Mammary epithelial cell (primary cell): ENCODE measurements at regions of chrX and their contacts with region 1.

Region 1: GRCh38 chrX:13487731-13488523 is 81.5 kb upstream of the EGFL6 start:
- DNase-seq: peak; percentile 93
- H3K4me3 ChIP-seq: no peak overlapping the region
- H3K27ac ChIP-seq: peak overlapping the region; percentile 84
- H3K4me1 ChIP-seq: peaks cover 35% of the 10 kb centered on the region
- H3K27me3 ChIP-seq: no peaks in the 10 kb centered on the region
- CTCF ChIP-seq: peak; percentile 52 to 70

Region 2: GRCh38 chrX:12701628-12702027 is 786.3 kb before region 1 on chrX:
- CTCF ChIA-PET with region 1: no interaction called
- dilution Hi-C with region 1: no loop called
- in situ Hi-C with region 1: no loop called
- intact Hi-C with region 1: loop called (anchors 10 kb)
- DNase-seq: peak; percentile 69
- H3K4me3 ChIP-seq: no peak overlapping the region
- H3K27ac ChIP-seq: no peak overlapping the region
- H3K4me1 ChIP-seq: peaks cover 6% of the 10 kb centered on the region
- H3K27me3 ChIP-seq: no peaks in the 10 kb centered on the region
- CTCF ChIP-seq: peak; percentile 53 to 77

Region 3: GRCh38 chrX:12751887-12752286 is 736.0 kb before region 1 on chrX:
- CTCF ChIA-PET with region 1: no interaction called
- dilution Hi-C with region 1: no loop called
- in situ Hi-C with region 1: no loop called
- intact Hi-C with region 1: no loop called
- DNase-seq: no peak
- H3K4me3 ChIP-seq: no peak overlapping the region
- H3K27ac ChIP-seq: no peak overlapping the region
- H3K4me1 ChIP-seq: no peaks in the 10 kb centered on the region
- H3K27me3 ChIP-seq: no peaks in the 10 kb centered on the region
- CTCF ChIP-seq: no peak

Region 4: DNA sequence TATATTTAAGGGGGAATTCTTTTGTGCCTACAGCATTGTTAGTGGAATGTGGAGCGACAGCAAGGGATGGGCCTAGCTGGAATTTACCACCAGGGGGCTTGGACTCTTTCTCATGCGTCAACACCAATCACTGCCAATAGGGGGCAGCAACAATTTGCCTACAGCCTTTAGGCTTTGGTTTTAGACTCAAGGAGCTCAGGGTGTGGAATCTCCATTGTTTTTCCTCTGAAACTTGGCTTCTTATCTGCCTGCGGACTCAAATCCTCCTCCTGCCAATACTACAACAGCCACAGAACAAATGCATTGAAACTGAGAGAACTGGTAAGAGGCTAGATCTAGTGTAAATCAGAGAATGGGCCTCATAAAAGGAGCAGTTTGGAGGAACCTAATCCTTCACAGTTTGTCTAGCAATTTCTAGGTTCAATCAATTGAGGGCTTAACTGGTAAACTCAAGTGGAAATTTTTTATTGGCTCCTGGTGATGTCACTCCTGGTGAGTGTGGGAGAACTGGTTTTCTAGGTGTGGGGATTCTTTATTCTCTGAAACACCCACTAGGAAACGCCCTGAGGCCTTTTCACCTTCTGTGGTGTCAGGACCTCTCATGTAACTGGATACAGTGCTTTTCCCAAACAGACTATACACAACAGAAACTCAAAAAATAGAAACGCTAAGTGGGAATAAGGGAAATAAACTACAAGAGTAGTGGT is 540.9 kb before region 1 on chrX:
- CTCF ChIA-PET with region 1: interaction called, 31 read pairs
- dilution Hi-C with region 1: no loop called
- in situ Hi-C with region 1: loop called (anchors 5 to 10 kb)
- intact Hi-C with region 1: loop called (anchors 1 kb)
- DNase-seq: peak; percentile 95
- H3K4me3 ChIP-seq: no peak overlapping the region
- H3K27ac ChIP-seq: peak overlapping the region; percentile 86
- H3K4me1 ChIP-seq: peaks cover 16% of the 10 kb centered on the region
- H3K27me3 ChIP-seq: no peaks in the 10 kb centered on the region
- CTCF ChIP-seq: peak; percentile 100

Region 5: DNA sequence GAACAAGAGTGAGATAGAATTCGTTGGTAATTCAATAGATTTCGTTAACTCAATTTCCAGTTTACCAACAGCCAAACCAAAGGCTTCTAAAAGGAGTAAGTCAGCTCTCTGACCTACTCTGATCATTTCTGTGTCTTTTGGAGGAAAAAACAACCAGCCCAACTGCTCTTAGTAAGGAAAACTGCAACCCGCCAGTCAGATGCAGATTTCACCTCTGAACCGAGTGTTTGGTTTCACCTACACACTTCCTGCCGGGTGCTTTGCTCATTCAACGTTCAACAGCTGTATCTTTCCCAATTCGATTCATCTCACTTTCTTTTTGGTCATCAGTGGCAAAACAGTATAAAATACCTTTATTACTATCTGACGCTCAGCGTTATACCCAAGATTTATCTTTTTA is 488.5 kb before region 1 on chrX:
- CTCF ChIA-PET with region 1: interaction called, 12 read pairs
- dilution Hi-C with region 1: no loop called
- in situ Hi-C with region 1: no loop called
- intact Hi-C with region 1: no loop called
- DNase-seq: no peak
- H3K4me3 ChIP-seq: no peak overlapping the region
- H3K27ac ChIP-seq: no peak overlapping the region
- H3K4me1 ChIP-seq: peaks cover 21% of the 10 kb centered on the region
- H3K27me3 ChIP-seq: no peaks in the 10 kb centered on the region
- CTCF ChIP-seq: no peak

Region 6: DNA sequence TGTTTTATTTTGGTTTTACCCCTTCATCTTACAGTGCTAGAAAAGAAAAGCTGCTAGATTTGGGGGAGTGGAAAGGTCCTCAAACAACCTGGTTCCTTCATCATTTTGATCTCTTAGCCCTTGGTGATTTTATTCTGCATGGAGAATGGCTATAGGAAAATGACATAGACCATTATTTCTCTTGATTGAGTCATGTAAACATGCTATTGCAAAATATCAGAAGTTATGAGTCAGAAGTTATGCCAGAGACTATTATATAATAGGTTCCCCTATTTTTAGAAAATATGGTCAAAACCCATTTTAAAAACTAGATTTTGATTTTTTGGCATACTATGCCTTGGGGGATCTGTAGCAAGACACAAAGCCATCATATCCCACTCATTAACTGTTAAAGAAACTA is 359.8 kb before region 1 on chrX:
- CTCF ChIA-PET with region 1: no interaction called
- dilution Hi-C with region 1: no loop called
- in situ Hi-C with region 1: loop called in 1 of 2 experiments (anchors 25 kb)
- intact Hi-C with region 1: loop called (anchors 2 kb)
- DNase-seq: peak; percentile 56
- H3K4me3 ChIP-seq: no peak overlapping the region
- H3K27ac ChIP-seq: no peak overlapping the region
- H3K4me1 ChIP-seq: peaks cover 11% of the 10 kb centered on the region
- H3K27me3 ChIP-seq: no peaks in the 10 kb centered on the region
- CTCF ChIP-seq: no peak

Region 7: GRCh38 chrX:13254076-13254785 is 233.7 kb before region 1 on chrX:
- CTCF ChIA-PET with region 1: no interaction called
- dilution Hi-C with region 1: no loop called
- in situ Hi-C with region 1: loop called in 1 of 2 experiments (anchors 25 kb)
- intact Hi-C with region 1: loop called (anchors 1 kb)
- DNase-seq: peak; percentile 74
- H3K4me3 ChIP-seq: no peak overlapping the region
- H3K27ac ChIP-seq: no peak overlapping the region
- H3K4me1 ChIP-seq: peaks cover 9% of the 10 kb centered on the region
- H3K27me3 ChIP-seq: no peaks in the 10 kb centered on the region
- CTCF ChIP-seq: peak in 1 of 2 donors; percentile 43

Region 8: DNA sequence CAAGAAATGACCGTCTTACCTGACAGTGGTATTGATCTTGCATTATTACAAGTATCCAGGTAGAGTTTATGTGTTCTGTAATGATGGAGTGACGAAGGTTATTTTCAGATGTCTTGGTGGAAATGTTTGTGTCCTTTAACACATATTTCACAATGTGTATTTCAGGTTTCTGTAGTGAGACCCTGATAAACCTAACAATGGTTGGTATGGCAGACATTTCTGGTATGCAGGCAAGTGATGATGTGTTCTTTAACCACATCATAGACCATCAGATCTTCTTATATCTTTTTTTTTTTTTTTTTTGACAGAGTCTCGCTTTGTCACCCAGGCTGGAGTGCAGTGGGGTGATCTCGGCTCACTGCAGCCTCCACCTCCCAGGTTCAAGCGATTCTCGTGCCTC is 153.4 kb before region 1 on chrX:
- CTCF ChIA-PET with region 1: no interaction called
- dilution Hi-C with region 1: no loop called
- in situ Hi-C with region 1: no loop called
- intact Hi-C with region 1: no loop called
- DNase-seq: no peak
- H3K4me3 ChIP-seq: no peak overlapping the region
- H3K27ac ChIP-seq: no peak overlapping the region
- H3K4me1 ChIP-seq: peaks cover 10% of the 10 kb centered on the region
- H3K27me3 ChIP-seq: no peaks in the 10 kb centered on the region
- CTCF ChIP-seq: no peak

Region 9: GRCh38 chrX:13376857-13377549 is 110.9 kb before region 1 on chrX:
- CTCF ChIA-PET with region 1: no interaction called
- dilution Hi-C with region 1: no loop called
- in situ Hi-C with region 1: no loop called
- intact Hi-C with region 1: loop called (anchors 5 kb)
- DNase-seq: peak; percentile 97
- H3K4me3 ChIP-seq: no peak overlapping the region
- H3K27ac ChIP-seq: peak overlapping the region; percentile 68
- H3K4me1 ChIP-seq: peaks cover 57% of the 10 kb centered on the region
- H3K27me3 ChIP-seq: no peaks in the 10 kb centered on the region
- CTCF ChIP-seq: no peak

Region 10: GRCh38 chrX:13520936-13521335 is 33.0 kb after region 1 on chrX:
- CTCF ChIA-PET with region 1: no interaction called
- dilution Hi-C with region 1: no loop called
- in situ Hi-C with region 1: no loop called
- intact Hi-C with region 1: no loop called
- DNase-seq: no peak
- H3K4me3 ChIP-seq: no peak overlapping the region
- H3K27ac ChIP-seq: no peak overlapping the region
- H3K4me1 ChIP-seq: no peaks in the 10 kb centered on the region
- H3K27me3 ChIP-seq: no peaks in the 10 kb centered on the region
- CTCF ChIP-seq: no peak